IMR-90 (cell line): ENCODE measurements at regions of chr11 and their contacts with region 1.

Region 1: DNA sequence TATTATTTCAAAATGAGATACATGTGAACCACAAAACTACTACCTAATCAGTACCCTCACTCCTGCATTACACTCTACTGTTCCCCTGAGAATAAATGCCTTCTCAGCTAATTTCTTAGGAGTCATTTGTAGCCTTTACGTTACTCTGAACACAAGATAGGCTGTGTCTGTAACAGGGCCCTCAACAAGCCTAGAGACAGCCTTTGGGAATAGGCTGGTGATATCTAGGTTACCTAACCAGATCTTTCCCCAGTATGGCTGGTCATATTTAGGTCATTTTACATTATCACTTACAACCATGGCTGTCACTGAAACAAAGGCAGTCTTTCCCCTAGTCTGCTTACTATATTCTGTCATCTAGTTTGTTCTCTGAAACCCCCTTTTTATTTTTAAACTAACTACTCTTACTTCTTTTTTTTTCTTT is 14.2 kb downstream of the ATM start:
- DNase-seq: no peak
- ATAC-seq: no peak
- H3K4me3 ChIP-seq: no peak overlapping the region
- H3K27ac ChIP-seq: no peak overlapping the region
- H3K4me1 ChIP-seq: no peaks in the 10 kb centered on the region
- H3K27me3 ChIP-seq: no peaks in the 10 kb centered on the region
- CTCF ChIP-seq: no peak
- POLR2A ChIP-seq: no peak
- RAD21 ChIP-seq: no peak

Region 2: GRCh38 chr11:107247167-107247861 is 989.8 kb before region 1 on chr11:
- CTCF ChIA-PET with region 1: no interaction called
- POLR2A ChIA-PET with region 1: no interaction called
- dilution Hi-C with region 1: no loop called
- in situ Hi-C with region 1: no loop called
- intact Hi-C with region 1: no loop called
- DNase-seq: no peak
- ATAC-seq: no peak
- H3K4me3 ChIP-seq: no peak overlapping the region
- H3K27ac ChIP-seq: no peak overlapping the region
- H3K4me1 ChIP-seq: no peaks in the 10 kb centered on the region
- H3K27me3 ChIP-seq: no peaks in the 10 kb centered on the region
- CTCF ChIP-seq: no peak
- POLR2A ChIP-seq: no peak
- RAD21 ChIP-seq: no peak

Region 3: GRCh38 chr11:107731941-107732688 is 505.0 kb before region 1 on chr11:
- CTCF ChIA-PET with region 1: no interaction called
- POLR2A ChIA-PET with region 1: no interaction called
- dilution Hi-C with region 1: no loop called
- in situ Hi-C with region 1: no loop called
- intact Hi-C with region 1: no loop called
- DNase-seq: no peak
- ATAC-seq: no peak
- H3K4me3 ChIP-seq: no peak overlapping the region
- H3K27ac ChIP-seq: no peak overlapping the region
- H3K4me1 ChIP-seq: no peaks in the 10 kb centered on the region
- H3K27me3 ChIP-seq: no peaks in the 10 kb centered on the region; the same call in 1 of the 2 replicates
- CTCF ChIP-seq: no peak
- POLR2A ChIP-seq: no peak
- RAD21 ChIP-seq: no peak

Region 4: DNA sequence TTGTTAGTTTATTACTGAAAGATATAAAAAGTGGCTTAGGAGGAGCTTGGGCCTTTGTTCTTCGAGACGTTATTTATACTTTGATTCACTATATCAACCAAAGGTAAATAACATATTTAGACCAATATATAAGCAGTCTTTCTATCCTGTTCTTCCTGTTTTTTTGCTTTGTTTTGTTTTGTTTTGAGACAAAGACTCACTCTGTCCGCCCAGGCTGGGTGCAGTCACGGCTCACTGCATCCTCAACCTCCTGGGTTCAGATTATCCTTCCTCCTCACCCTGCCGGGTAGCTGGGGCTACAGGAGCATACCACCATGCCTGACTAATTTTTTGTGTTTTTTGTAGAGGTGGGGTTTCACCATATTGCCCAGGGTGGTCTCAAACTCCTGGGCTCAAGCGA is 52.6 kb after region 1 on chr11:
- CTCF ChIA-PET with region 1: no interaction called
- POLR2A ChIA-PET with region 1: no interaction called
- dilution Hi-C with region 1: no loop called
- in situ Hi-C with region 1: no loop called
- intact Hi-C with region 1: loop called (anchors 5 kb)
- DNase-seq: no peak
- ATAC-seq: no peak
- H3K4me3 ChIP-seq: no peak overlapping the region
- H3K27ac ChIP-seq: no peak overlapping the region
- H3K4me1 ChIP-seq: no peaks in the 10 kb centered on the region
- H3K27me3 ChIP-seq: no peaks in the 10 kb centered on the region
- CTCF ChIP-seq: no peak
- POLR2A ChIP-seq: no peak
- RAD21 ChIP-seq: no peak

Region 5: GRCh38 chr11:108994887-108995286 is 757.8 kb after region 1 on chr11:
- CTCF ChIA-PET with region 1: no interaction called
- POLR2A ChIA-PET with region 1: no interaction called
- dilution Hi-C with region 1: no loop called
- in situ Hi-C with region 1: no loop called
- intact Hi-C with region 1: no loop called
- DNase-seq: no peak
- ATAC-seq: no peak
- H3K4me3 ChIP-seq: no peak overlapping the region
- H3K27ac ChIP-seq: no peak overlapping the region
- H3K4me1 ChIP-seq: no peaks in the 10 kb centered on the region
- H3K27me3 ChIP-seq: no peaks in the 10 kb centered on the region
- CTCF ChIP-seq: no peak
- POLR2A ChIP-seq: no peak
- RAD21 ChIP-seq: no peak